ENCODE measurements at regions of chrX and their contacts with region 1.

Region 1: GRCh38 chrX:15564981-15565579 is 35.7 kb downstream of the ACE2 start:
- DNase-seq: peak; percentile 24 to 59
- ATAC-seq: peak; percentile 85 to 96
- H3K4me3 ChIP-seq: no peak overlapping the region
- H3K27ac ChIP-seq: no peak overlapping the region
- H3K4me1 ChIP-seq: no peaks in the 10 kb centered on the region
- H3K27me3 ChIP-seq: peaks cover 0 to 4% (median 0%) of the 10 kb centered on the region in 3 donors
- CTCF ChIP-seq: peak in 4 of 5 experiments; percentile 26 to 61 (median 46)
- POLR2A ChIP-seq: no peak

Region 2: DNA sequence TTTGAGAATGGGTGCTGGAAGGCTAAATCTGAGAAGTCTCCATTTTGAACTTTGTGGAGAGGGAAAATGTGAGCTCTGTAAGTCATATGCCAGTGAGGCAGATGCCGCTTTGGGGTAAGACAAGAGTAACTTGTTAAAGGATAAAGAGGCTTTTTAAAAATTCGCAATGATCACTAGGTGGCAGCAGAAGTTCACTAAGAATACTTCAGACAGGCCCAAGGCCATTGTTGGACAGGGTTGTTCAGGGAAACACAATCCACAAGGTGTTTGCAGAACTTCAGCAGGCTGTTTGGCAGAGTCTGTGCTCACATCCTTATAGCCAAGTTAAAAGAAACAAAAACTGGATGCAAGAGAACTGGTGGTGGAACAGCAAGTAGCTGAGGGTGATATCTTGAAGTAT is 216.0 kb before region 1 on chrX:
- in situ Hi-C with region 1: loop called in 1 of 4 experiments (anchors 10 kb)
- intact Hi-C with region 1: loop called (anchors 10 kb)
- DNase-seq: peak in 1 of 2 donors; percentile 44
- ATAC-seq: peak; percentile 75 to 84
- H3K4me3 ChIP-seq: no peak overlapping the region
- H3K27ac ChIP-seq: no peak overlapping the region
- H3K4me1 ChIP-seq: no peaks in the 10 kb centered on the region
- H3K27me3 ChIP-seq: no peaks in the 10 kb centered on the region
- CTCF ChIP-seq: peak; percentile 6 to 57 (median 42)
- POLR2A ChIP-seq: no peak